A673 (cell line): ENCODE measurements at regions of chr6 and their contacts with region 1.

Region 1: GRCh38 chr6:48584846-48585245 is 473.8 kb upstream of the PTCHD4 start:
- DNase-seq: no peak
- H3K4me3 ChIP-seq: no peak overlapping the region
- H3K27ac ChIP-seq: no peak overlapping the region
- H3K4me1 ChIP-seq: no peaks in the 10 kb centered on the region
- H3K27me3 ChIP-seq: no peaks in the 10 kb centered on the region
- CTCF ChIP-seq: no peak

Region 2: DNA sequence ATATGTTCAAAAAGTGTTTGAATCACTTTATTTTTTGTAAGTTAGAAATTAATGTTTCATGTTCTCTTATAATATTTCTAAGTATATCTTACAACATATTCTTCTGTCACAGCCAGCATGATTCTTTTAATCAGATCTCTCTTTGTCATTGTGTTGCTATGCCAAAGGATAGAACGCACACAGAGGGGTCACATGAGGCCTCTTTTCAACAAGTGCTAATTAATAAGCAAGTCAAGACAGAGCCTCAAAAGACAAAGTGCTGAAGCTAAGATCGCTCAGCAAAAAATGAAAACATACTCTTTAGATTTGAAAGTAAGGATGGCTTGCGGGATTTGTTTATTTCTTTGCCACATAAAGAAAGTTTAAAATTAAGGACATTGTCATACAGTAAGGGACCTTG is 34.9 kb after region 1 on chr6:
- CTCF ChIA-PET with region 1: interaction called, 21 read pairs
- POLR2A ChIA-PET with region 1: no interaction called
- intact Hi-C with region 1: no loop called
- DNase-seq: no peak
- H3K4me3 ChIP-seq: no peak overlapping the region
- H3K27ac ChIP-seq: no peak overlapping the region
- H3K4me1 ChIP-seq: no peaks in the 10 kb centered on the region
- H3K27me3 ChIP-seq: no peaks in the 10 kb centered on the region
- CTCF ChIP-seq: no peak